HEK293 (cell line): ENCODE measurements at regions of chr2 and their contacts with region 1.

Region 1: GRCh38 chr2:170235860-170236679 is 58.1 kb downstream of the MYO3B start:
- H3K4me3 ChIP-seq: no peak overlapping the region
- H3K27ac ChIP-seq: no peak overlapping the region
- H3K4me1 ChIP-seq: no peaks in the 10 kb centered on the region
- CTCF ChIP-seq: peak; percentile 54; the same call in 1 of the 2 replicates

Region 2: GRCh38 chr2:170022692-170023091 is 213.4 kb before region 1 on chr2:
- CTCF ChIA-PET with region 1: no interaction called
- POLR2A ChIA-PET with region 1: no interaction called
- H3K4me3 ChIP-seq: no peak overlapping the region
- H3K27ac ChIP-seq: no peak overlapping the region
- H3K4me1 ChIP-seq: no peaks in the 10 kb centered on the region
- CTCF ChIP-seq: no peak

Region 3: GRCh38 chr2:170369894-170370293 is 133.8 kb after region 1 on chr2:
- CTCF ChIA-PET with region 1: interaction called, 14 read pairs
- POLR2A ChIA-PET with region 1: interaction called, 3 read pairs
- H3K4me3 ChIP-seq: no peak overlapping the region
- H3K27ac ChIP-seq: no peak overlapping the region
- H3K4me1 ChIP-seq: no peaks in the 10 kb centered on the region
- CTCF ChIP-seq: 0 out of 2 replicates have a peak, but pooled peaks have one; percentile 7